ENCODE measurements at regions of chr2 and their contacts with region 1.

Region 1: GRCh38 chr2:239035361-239036078 is 187.6 kb downstream of the TWIST2 start:
- DNase-seq: peak; percentile 89
- H3K4me3 ChIP-seq: no peak overlapping the region
- H3K27ac ChIP-seq: no peak overlapping the region
- H3K4me1 ChIP-seq: peaks cover 0 to 8% (median 3%) of the 10 kb centered on the region in 6 donors
- H3K27me3 ChIP-seq: peaks cover 0 to 32% (median 0%) of the 10 kb centered on the region in 7 donors
- CTCF ChIP-seq: peak; percentile 24 to 96 (median 87)
- POLR2A ChIP-seq: no peak

Region 2: GRCh38 chr2:238560234-238560633 is 475.3 kb before region 1 on chr2:
- intact Hi-C with region 1: no loop called
- DNase-seq: peak; percentile 56
- H3K4me3 ChIP-seq: no peak overlapping the region
- H3K27ac ChIP-seq: no peak overlapping the region
- H3K4me1 ChIP-seq: no peaks in the 10 kb centered on the region
- H3K27me3 ChIP-seq: peaks cover 0 to 44% (median 0%) of the 10 kb centered on the region in 7 donors
- CTCF ChIP-seq: no peak
- POLR2A ChIP-seq: no peak

Region 3: DNA sequence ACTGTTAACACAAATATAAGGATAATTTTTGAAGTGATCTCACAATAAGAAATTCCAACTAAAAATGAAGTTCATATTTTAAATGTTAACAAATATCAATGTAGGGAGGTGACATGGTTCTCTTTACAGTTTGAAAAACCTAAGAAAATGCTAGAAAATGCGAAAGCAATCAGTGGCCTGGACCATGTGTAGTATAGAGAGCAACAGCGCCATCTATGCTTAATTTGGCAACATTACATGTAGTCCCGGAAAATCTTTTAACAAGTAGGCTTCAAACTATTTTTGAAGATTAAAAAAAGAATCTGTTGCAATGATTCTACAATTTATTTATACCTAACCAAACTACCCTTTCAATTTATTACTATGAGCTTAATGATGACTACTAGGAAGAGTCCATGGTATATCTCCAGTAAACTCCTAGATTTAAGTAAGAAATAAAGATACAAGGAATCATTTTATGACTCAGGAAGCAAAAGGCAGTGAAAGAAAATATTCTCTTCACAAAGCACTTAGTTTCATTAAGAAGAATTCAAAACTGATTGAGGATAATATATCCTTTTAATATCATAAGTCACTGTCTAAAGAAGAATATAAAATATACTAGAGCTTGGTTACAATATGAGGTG is 956.3 kb after region 1 on chr2:
- intact Hi-C with region 1: loop called (anchors 10 kb)
- DNase-seq: no peak
- H3K4me3 ChIP-seq: no peak overlapping the region
- H3K27ac ChIP-seq: no peak overlapping the region
- H3K4me1 ChIP-seq: peaks cover 0 to 8% (median 0%) of the 10 kb centered on the region in 6 donors
- H3K27me3 ChIP-seq: no peaks in the 10 kb centered on the region
- CTCF ChIP-seq: peak; percentile 54 to 89 (median 81)
- POLR2A ChIP-seq: no peak